Calu3 (cell line): ENCODE measurements at regions of chr13 and their contacts with region 1.

Region 1: DNA sequence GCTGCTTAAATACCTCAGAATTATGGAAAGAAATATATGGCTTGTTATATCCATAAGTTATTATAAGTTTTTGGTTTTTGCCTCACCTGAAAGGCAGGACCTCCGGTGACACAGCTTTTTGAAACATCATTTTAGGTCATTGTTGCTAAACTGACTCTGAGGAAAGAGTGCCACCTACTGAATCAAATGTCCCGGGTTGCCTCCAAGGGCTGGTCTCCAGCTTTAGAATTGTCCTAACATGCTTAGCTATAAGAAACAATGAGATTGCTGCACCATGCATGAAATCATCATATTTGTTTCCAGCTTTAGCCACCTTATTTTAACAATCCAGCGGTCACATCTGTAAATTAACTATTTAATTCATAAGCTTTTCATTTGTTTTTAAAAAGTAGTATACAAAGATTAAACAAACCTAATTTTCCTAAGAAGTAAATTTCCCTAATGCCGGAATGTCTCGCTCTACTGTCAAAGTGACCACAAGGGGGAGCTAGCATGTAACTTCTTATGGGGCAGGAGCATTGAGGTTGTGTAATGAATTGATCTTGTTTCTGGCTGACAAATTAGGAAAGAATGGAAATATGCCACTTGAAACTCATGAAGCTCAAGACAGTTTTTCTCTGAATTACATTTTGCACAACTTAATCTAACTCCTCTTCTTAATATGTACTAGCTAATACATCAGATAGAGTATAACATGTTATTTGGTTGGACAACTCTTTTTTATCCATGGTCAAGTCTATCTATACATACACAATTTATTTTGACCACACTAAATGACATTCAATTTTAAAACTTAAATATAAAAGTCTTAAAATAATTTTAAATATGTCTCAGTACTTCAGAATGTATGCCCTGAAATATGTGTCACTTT is 6.7 kb upstream of the PCDH17 start:
- DNase-seq: peak; percentile 8
- H3K4me3 Mint-ChIP-seq: no peak overlapping the region
- H3K27ac Mint-ChIP-seq: no peak overlapping the region
- H3K4me1 Mint-ChIP-seq: no peaks in the 10 kb centered on the region
- H3K27me3 Mint-ChIP-seq: no peaks in the 10 kb centered on the region
- CTCF ChIP-seq: peak; percentile 8

Region 2: DNA sequence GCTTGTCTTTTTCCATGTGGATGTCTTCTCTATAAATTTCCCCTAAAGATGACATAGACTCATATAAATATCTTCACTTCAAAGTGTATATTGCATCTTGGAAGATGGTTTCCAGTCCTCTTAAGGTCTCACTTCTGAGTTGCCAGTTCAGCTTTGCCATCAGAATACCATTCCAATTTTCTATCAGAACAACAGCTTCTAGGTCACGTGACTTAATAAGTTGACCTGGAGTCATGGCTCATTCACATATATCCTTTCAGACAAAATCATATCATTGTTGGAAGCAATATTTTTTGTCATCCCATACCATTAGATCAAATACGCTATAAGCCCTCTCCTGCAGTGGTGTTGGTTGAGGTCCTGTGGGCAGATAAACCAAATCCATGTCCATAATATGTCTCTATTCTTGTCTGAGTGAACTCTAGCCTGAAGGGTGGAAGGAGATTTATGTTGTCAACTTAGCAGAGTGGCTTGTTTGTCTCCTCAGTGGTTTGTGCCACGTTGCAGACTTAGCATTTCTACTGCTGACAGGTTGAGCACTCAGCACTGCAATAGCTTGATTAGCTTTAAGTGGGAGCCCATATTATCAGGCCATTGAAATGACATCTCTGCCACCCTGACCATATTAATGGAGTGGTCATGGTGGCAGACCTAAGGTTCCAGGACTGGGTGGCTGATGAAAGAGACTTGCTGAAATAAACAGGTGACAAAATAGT is 116.9 kb before region 1 on chr13:
- CTCF ChIA-PET with region 1: no interaction called
- intact Hi-C with region 1: no loop called
- DNase-seq: no peak
- H3K4me3 Mint-ChIP-seq: no peak overlapping the region
- H3K27ac Mint-ChIP-seq: no peak overlapping the region
- H3K4me1 Mint-ChIP-seq: no peaks in the 10 kb centered on the region
- H3K27me3 Mint-ChIP-seq: no peaks in the 10 kb centered on the region
- CTCF ChIP-seq: no peak

Region 3: DNA sequence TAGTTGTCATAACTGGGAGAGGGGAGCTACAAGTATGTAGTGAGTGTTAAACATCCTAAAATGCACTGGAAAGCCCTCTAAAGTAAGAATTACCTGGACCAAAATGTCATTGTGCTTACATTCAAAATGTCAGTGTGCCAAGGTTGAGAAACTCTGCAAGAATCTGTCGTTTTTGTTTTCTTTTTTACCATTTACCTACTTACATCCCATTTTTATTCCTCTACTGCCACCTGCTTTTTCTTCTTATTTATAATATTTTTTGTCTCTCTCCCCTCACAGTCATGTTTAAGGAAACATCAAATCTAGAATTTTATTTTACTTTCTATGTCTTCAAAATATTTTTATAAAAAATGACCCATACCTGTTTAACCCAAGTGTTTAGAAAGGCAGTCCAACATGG is 233.1 kb after region 1 on chr13:
- CTCF ChIA-PET with region 1: no interaction called
- intact Hi-C with region 1: loop called (anchors 10 kb)
- DNase-seq: no peak
- H3K4me3 Mint-ChIP-seq: no peak overlapping the region
- H3K27ac Mint-ChIP-seq: no peak overlapping the region
- H3K4me1 Mint-ChIP-seq: no peaks in the 10 kb centered on the region
- H3K27me3 Mint-ChIP-seq: no peaks in the 10 kb centered on the region
- CTCF ChIP-seq: no peak

Region 4: DNA sequence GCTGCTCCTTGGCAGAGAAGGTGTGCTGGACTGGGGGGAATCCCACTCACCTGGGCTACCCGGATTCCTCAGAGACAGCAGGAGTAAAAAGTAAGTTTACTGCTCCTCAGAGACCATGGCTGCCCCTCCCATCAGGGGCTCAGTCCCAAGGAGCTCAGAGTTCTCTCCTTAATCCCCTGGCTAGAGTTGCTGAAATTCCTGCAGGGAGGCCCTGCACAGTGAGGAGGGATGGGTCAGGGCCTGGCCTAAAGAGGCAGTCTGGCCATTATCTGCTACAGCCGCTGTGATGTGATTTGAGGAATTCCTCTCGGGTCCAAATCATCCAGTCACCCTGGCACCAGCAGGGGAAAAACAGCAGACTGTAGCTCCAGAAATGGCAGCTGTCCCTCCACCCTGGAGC is 509.2 kb after region 1 on chr13:
- CTCF ChIA-PET with region 1: no interaction called
- intact Hi-C with region 1: no loop called
- DNase-seq: no peak
- H3K4me3 Mint-ChIP-seq: no peak overlapping the region
- H3K27ac Mint-ChIP-seq: no peak overlapping the region
- H3K4me1 Mint-ChIP-seq: no peaks in the 10 kb centered on the region
- H3K27me3 Mint-ChIP-seq: no peaks in the 10 kb centered on the region
- CTCF ChIP-seq: no peak